CD4-positive, alpha-beta memory T cell (primary cell): ENCODE measurements at regions of chr1 and their contacts with region 1.

Region 1: DNA sequence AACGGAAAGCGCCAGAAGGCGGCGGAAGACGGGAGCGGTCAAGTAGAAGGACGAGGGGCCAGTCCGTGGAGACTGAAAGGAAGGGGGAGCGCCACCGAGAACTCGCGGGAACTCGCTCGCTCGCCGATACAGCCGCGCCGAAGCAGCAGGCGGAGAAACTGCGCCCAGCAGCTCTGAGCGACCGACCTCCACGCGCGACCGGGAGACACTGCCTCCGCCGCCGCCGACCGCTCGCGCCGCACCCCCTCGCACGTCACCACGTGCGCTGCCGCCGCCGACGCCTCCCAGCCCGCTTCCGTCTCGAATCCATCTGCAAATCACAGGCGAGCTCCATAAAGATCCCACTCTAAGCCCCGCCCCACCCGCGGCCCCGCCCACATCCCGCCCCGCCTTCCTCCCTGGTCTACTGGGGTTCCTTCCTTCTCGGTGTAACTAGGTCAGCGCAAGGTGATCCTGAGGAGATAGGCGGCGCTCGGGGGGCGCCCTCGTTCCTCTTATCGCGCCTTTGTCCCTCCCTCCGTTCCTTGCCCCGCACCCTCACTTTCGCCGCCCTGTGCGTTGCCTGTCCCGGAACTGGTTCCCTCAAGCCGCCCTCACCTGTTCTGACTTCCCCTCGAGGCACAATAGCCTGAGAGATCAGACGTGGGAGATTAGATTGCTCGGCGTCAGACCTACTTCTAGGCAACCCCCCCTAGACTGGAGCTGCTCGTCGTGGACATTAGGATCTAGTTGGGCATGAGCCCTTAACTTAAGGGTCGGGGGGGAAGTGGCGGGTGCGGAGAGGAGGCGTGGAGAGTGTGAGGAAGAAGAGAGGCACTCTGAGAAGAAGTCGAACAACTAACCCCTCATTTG is at the start of gene IVNS1ABP:
- DNase-seq: peak; percentile 94 to 97 (median 96)
- H3K4me3 ChIP-seq: peak within 1 kb of the TSS; percentile 82 to 90
- H3K4me3 Mint-ChIP-seq: peak within 1 kb of the TSS; percentile 93 to 99 (median 97)
- H3K27ac ChIP-seq: peak within 1 kb of the TSS; percentile 99
- H3K27ac Mint-ChIP-seq: peak within 1 kb of the TSS; percentile 99 to 100 (median 99)
- H3K4me1 ChIP-seq: peaks cover 47% of the 10 kb centered on the region
- H3K4me1 Mint-ChIP-seq: peaks cover 29 to 58% (median 47%) of the 10 kb centered on the region in 4 donors
- H3K27me3 ChIP-seq: no peaks in the 10 kb centered on the region
- H3K27me3 Mint-ChIP-seq: no peaks in the 10 kb centered on the region
- total RNA-seq, gene IVNS1ABP: 179 to 187 TPM

Region 2: GRCh38 chr1:184892116-184892515 is 425.1 kb before region 1 on chr1:
- CTCF ChIA-PET with region 1: no interaction called
- POLR2A ChIA-PET with region 1: no interaction called
- intact Hi-C with region 1: loop called (anchors 1 kb)
- DNase-seq: peak; percentile 19 to 39 (median 29)
- H3K4me3 ChIP-seq: no peak overlapping the region
- H3K4me3 Mint-ChIP-seq: peak overlapping the region in 7 of 8 donors; percentile 49 to 71 (median 59)
- H3K27ac ChIP-seq: peak overlapping the region; percentile 52
- H3K27ac Mint-ChIP-seq: peak overlapping the region; percentile 74 to 95 (median 90)
- H3K4me1 ChIP-seq: peaks cover 64% of the 10 kb centered on the region
- H3K4me1 Mint-ChIP-seq: peaks cover 42 to 74% (median 58%) of the 10 kb centered on the region in 4 donors
- H3K27me3 ChIP-seq: no peaks in the 10 kb centered on the region
- H3K27me3 Mint-ChIP-seq: no peaks in the 10 kb centered on the region

Region 3: GRCh38 chr1:185244015-185244747 is 73.1 kb before region 1 on chr1:
- CTCF ChIA-PET with region 1: interaction called, 42 read pairs
- POLR2A ChIA-PET with region 1: interaction called, 109 read pairs
- intact Hi-C with region 1: no loop called
- DNase-seq: no peak
- H3K4me3 ChIP-seq: no peak overlapping the region
- H3K4me3 Mint-ChIP-seq: no peak overlapping the region
- H3K27ac ChIP-seq: no peak overlapping the region
- H3K27ac Mint-ChIP-seq: peak overlapping the region in 1 of 7 donors; percentile 22
- H3K4me1 ChIP-seq: peaks cover 20% of the 10 kb centered on the region
- H3K4me1 Mint-ChIP-seq: peaks cover 15 to 33% (median 23%) of the 10 kb centered on the region in 4 donors
- H3K27me3 ChIP-seq: no peaks in the 10 kb centered on the region
- H3K27me3 Mint-ChIP-seq: no peaks in the 10 kb centered on the region

Region 4: DNA sequence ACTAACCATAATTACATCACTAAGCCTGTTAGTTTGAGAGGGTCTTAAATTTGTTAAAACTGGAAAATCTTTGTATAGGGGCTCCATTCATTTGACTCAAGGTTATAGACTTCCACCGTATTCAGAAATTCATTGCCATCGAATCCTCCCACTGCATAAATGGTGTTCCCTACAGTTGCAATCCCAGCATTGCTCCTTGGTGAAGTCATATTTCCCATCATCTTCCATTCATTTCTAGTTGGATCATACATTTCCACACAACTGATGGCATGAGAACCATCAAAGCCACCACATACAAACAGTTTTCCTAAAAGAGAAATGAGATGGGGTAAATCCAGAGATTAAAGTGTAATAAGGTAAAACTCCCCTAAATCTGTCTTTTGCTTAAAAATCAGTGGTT is 19.3 kb before region 1 on chr1:
- CTCF ChIA-PET with region 1: interaction called, 8 read pairs
- POLR2A ChIA-PET with region 1: interaction called, 27 read pairs
- intact Hi-C with region 1: loop called (anchors 2 kb)
- DNase-seq: no peak
- H3K4me3 ChIP-seq: no peak overlapping the region
- H3K4me3 Mint-ChIP-seq: no peak overlapping the region
- H3K27ac ChIP-seq: no peak overlapping the region
- H3K27ac Mint-ChIP-seq: peak overlapping the region in 4 of 7 donors; percentile 4 to 74 (median 26)
- H3K4me1 ChIP-seq: no peaks in the 10 kb centered on the region
- H3K4me1 Mint-ChIP-seq: peaks cover 7 to 18% (median 10%) of the 10 kb centered on the region in 4 donors
- H3K27me3 ChIP-seq: no peaks in the 10 kb centered on the region
- H3K27me3 Mint-ChIP-seq: no peaks in the 10 kb centered on the region

Region 5: GRCh38 chr1:185439727-185440415 is 122.6 kb after region 1 on chr1:
- CTCF ChIA-PET with region 1: no interaction called
- POLR2A ChIA-PET with region 1: interaction called, 6 read pairs
- intact Hi-C with region 1: loop called (anchors 5 kb)
- DNase-seq: peak; percentile 15 to 63 (median 32)
- H3K4me3 ChIP-seq: no peak overlapping the region
- H3K4me3 Mint-ChIP-seq: no peak overlapping the region
- H3K27ac ChIP-seq: peak overlapping the region; percentile 48
- H3K27ac Mint-ChIP-seq: no peak overlapping the region
- H3K4me1 ChIP-seq: peaks cover 30% of the 10 kb centered on the region
- H3K4me1 Mint-ChIP-seq: peaks cover 3 to 10% (median 5%) of the 10 kb centered on the region in 4 donors
- H3K27me3 ChIP-seq: no peaks in the 10 kb centered on the region
- H3K27me3 Mint-ChIP-seq: no peaks in the 10 kb centered on the region

Region 6: DNA sequence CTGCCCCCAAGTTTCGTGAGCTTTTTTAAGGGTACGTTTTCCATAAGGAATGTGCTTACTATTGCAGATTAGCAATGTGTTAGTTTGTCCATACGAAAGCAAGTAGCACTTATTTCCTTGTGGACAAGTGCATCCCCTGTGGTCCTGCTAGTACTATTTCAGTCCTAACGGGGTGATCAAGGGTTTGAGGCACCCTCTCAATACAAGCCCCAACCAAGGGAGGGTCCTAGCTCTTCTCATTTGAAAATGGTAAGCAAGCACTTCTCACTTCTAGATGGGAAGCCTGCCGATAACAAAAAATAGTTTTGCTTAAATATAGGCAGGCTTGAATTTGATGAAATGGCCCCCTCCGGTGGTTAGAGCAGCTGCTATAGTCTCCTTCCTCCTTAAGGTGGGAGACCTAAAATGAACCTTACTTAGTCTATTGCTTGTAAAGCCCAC is 352.9 kb after region 1 on chr1:
- CTCF ChIA-PET with region 1: interaction called, 66 read pairs
- POLR2A ChIA-PET with region 1: interaction called, 82 read pairs
- intact Hi-C with region 1: loop called (anchors 1 kb)
- DNase-seq: peak; percentile 44 to 59 (median 57)
- H3K4me3 ChIP-seq: no peak overlapping the region
- H3K4me3 Mint-ChIP-seq: no peak overlapping the region
- H3K27ac ChIP-seq: no peak overlapping the region
- H3K27ac Mint-ChIP-seq: peak overlapping the region in 3 of 7 donors; percentile 3 to 31 (median 21)
- H3K4me1 ChIP-seq: peaks cover 14% of the 10 kb centered on the region
- H3K4me1 Mint-ChIP-seq: peaks cover 14 to 28% (median 20%) of the 10 kb centered on the region in 4 donors
- H3K27me3 ChIP-seq: no peaks in the 10 kb centered on the region
- H3K27me3 Mint-ChIP-seq: no peaks in the 10 kb centered on the region